ENCODE measurements at regions of chr1 and their contacts with region 1.

Region 1: GRCh38 chr1:32716312-32717148 is 14.0 kb upstream of the SYNC start:
- DNase-seq: peak; percentile 85
- H3K4me3 ChIP-seq: no peak overlapping the region
- H3K27ac ChIP-seq: no peak overlapping the region
- H3K4me1 ChIP-seq: peaks cover 10% of the 10 kb centered on the region
- CTCF ChIP-seq: no peak

Region 2: DNA sequence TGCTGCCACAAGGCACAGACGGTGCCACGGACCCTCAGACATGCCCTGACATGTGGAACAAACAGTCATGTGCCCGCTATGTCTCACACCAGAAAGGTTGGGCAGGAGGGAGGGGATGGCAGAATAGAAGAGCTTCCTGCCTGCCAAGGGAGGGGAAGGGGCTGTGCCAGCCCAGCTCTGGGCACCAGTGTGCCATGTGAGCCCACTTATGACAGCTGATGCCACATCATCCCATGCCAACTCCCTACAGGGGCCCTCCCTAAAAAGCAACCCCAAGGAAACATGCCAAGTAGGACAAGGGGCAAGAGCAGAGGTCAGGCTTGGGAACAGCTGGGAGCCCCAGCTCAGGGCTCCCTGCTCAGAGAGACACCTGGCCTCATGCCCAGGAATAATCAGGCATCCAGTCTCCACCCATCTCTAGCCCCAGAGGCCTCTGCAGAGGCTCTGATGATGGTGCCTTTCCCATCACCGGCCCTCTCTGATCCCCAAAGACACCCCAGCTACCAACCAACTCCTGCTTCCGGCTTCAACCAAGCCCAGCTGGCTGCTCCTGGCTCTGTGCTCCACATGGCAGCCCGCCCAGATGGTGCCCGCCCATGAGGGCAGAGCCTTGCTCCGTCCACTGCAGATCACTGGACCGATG is 962.7 kb before region 1 on chr1:
- CTCF ChIA-PET with region 1: no interaction called
- POLR2A ChIA-PET with region 1: no interaction called
- intact Hi-C with region 1: no loop called
- DNase-seq: no peak
- H3K4me3 ChIP-seq: no peak overlapping the region
- H3K27ac ChIP-seq: no peak overlapping the region
- H3K4me1 ChIP-seq: peaks cover 24% of the 10 kb centered on the region
- CTCF ChIP-seq: no peak

Region 3: GRCh38 chr1:32291708-32292492 is 424.6 kb before region 1 on chr1 and contains the start of gene HDAC1:
- CTCF ChIA-PET with region 1: no interaction called
- POLR2A ChIA-PET with region 1: no interaction called
- intact Hi-C with region 1: no loop called
- DNase-seq: peak; percentile 99
- H3K4me3 ChIP-seq: peak within 1 kb of the TSS; percentile 91
- H3K27ac ChIP-seq: peak within 1 kb of the TSS; percentile 78
- H3K4me1 ChIP-seq: peaks cover 58% of the 10 kb centered on the region
- CTCF ChIP-seq: no peak
- total RNA-seq, gene HDAC1: 259 and 270 TPM in 2 replicates

Region 4: GRCh38 chr1:32684167-32684811 is 32.2 kb before region 1 on chr1:
- CTCF ChIA-PET with region 1: no interaction called
- POLR2A ChIA-PET with region 1: no interaction called
- intact Hi-C with region 1: no loop called
- DNase-seq: no peak
- H3K4me3 ChIP-seq: no peak overlapping the region
- H3K27ac ChIP-seq: no peak overlapping the region
- H3K4me1 ChIP-seq: no peaks in the 10 kb centered on the region
- CTCF ChIP-seq: no peak

Region 5: GRCh38 chr1:32773018-32773763 is 56.7 kb after region 1 on chr1:
- CTCF ChIA-PET with region 1: interaction called, 5 read pairs
- POLR2A ChIA-PET with region 1: no interaction called
- intact Hi-C with region 1: loop called (anchors 1 kb)
- DNase-seq: peak; percentile 75
- H3K4me3 ChIP-seq: no peak overlapping the region
- H3K27ac ChIP-seq: peak overlapping the region; percentile 15
- H3K4me1 ChIP-seq: no peaks in the 10 kb centered on the region
- CTCF ChIP-seq: peak; percentile 99

Region 6: GRCh38 chr1:32786856-32787255 is 70.3 kb after region 1 on chr1:
- CTCF ChIA-PET with region 1: no interaction called
- POLR2A ChIA-PET with region 1: no interaction called
- intact Hi-C with region 1: no loop called
- DNase-seq: peak; percentile 25
- H3K4me3 ChIP-seq: no peak overlapping the region
- H3K27ac ChIP-seq: no peak overlapping the region
- H3K4me1 ChIP-seq: no peaks in the 10 kb centered on the region
- CTCF ChIP-seq: peak; percentile 63

Region 7: DNA sequence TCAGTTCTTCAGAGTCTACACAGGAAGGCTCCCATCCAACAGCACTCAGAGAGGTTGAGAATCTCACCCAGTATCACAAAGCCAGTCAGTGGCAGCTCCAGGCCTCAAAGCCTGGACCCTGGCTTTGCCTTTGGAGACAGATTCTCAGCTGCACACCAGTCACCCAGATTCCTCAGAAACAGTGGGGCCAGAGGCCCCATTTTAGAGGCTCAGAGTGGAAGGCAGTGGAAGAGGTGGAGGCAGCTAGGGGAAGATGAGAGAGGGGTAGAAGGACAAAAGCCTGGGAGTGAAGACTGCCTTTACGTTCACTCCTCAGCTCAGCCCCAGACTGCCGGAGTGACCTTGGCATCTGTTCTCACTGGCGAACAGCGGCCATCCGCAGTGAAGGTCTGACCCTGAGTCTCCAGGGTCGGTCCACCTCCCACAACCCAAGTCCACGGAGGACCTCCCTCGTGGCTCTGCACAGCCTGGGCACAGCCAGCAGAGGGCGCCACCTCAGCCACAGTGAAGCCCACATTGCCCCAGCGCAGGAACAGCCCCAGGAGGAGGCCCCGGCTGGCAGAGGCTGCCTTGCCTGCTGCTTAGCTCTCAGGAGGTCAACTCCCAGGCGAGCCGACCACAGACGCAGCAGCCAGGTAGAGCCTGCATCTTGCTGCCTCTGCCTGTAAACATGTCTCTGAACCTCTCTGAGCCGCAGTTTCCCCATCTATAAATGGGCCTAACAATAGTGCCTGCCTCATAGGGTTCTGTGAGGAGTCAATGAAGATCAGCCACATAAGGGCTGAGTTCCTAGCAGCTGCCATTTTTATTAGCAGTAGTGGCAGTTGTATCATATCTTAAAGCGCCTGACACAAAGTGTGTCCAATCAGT is 160.0 kb after region 1 on chr1:
- CTCF ChIA-PET with region 1: no interaction called
- POLR2A ChIA-PET with region 1: interaction called, 13 read pairs
- intact Hi-C with region 1: loop called (anchors 2 kb)
- DNase-seq: peak; percentile 73
- H3K4me3 ChIP-seq: no peak overlapping the region
- H3K27ac ChIP-seq: no peak overlapping the region
- H3K4me1 ChIP-seq: peaks cover 35% of the 10 kb centered on the region
- CTCF ChIP-seq: peak; percentile 97

Region 8: GRCh38 chr1:33086384-33086850 is 369.9 kb after region 1 on chr1:
- CTCF ChIA-PET with region 1: no interaction called
- POLR2A ChIA-PET with region 1: no interaction called
- intact Hi-C with region 1: loop called (anchors 5 kb)
- DNase-seq: peak; percentile 72
- H3K4me3 ChIP-seq: no peak overlapping the region
- H3K27ac ChIP-seq: no peak overlapping the region
- H3K4me1 ChIP-seq: peaks cover 19% of the 10 kb centered on the region
- CTCF ChIP-seq: peak; percentile 84